CD8-positive, alpha-beta memory T cell (primary cell): ENCODE measurements at regions of chr1 and their contacts with region 1.

Region 1: GRCh38 chr1:9629445-9630201 is 21.9 kb upstream of the PIK3CD start:
- DNase-seq: peak; percentile 59 to 89 (median 75)
- H3K4me3 ChIP-seq: peak overlapping the region; percentile 94
- H3K4me3 Mint-ChIP-seq: peak overlapping the region; percentile 89 to 98 (median 97)
- H3K27ac ChIP-seq: peak overlapping the region; percentile 76
- H3K27ac Mint-ChIP-seq: peak overlapping the region; percentile 87 to 98 (median 93)
- H3K4me1 ChIP-seq: peaks cover 59% of the 10 kb centered on the region
- H3K4me1 Mint-ChIP-seq: peaks cover 46 to 81% (median 71%) of the 10 kb centered on the region in 3 donors
- H3K27me3 ChIP-seq: no peaks in the 10 kb centered on the region
- H3K27me3 Mint-ChIP-seq: no peaks in the 10 kb centered on the region

Region 2: GRCh38 chr1:9643351-9644256 is 14.0 kb after region 1 on chr1:
- CTCF ChIA-PET with region 1: interaction called, 53 read pairs
- POLR2A ChIA-PET with region 1: interaction called, 11 read pairs
- DNase-seq: peak in 1 of 5 donors; percentile 54
- H3K4me3 ChIP-seq: no peak overlapping the region
- H3K4me3 Mint-ChIP-seq: peak overlapping the region; percentile 26 to 77 (median 55)
- H3K27ac ChIP-seq: no peak overlapping the region
- H3K27ac Mint-ChIP-seq: peak overlapping the region; percentile 47 to 91 (median 77)
- H3K4me1 ChIP-seq: peaks cover 57% of the 10 kb centered on the region
- H3K4me1 Mint-ChIP-seq: peaks cover 47 to 75% (median 61%) of the 10 kb centered on the region in 3 donors
- H3K27me3 ChIP-seq: no peaks in the 10 kb centered on the region
- H3K27me3 Mint-ChIP-seq: no peaks in the 10 kb centered on the region

Region 3: DNA sequence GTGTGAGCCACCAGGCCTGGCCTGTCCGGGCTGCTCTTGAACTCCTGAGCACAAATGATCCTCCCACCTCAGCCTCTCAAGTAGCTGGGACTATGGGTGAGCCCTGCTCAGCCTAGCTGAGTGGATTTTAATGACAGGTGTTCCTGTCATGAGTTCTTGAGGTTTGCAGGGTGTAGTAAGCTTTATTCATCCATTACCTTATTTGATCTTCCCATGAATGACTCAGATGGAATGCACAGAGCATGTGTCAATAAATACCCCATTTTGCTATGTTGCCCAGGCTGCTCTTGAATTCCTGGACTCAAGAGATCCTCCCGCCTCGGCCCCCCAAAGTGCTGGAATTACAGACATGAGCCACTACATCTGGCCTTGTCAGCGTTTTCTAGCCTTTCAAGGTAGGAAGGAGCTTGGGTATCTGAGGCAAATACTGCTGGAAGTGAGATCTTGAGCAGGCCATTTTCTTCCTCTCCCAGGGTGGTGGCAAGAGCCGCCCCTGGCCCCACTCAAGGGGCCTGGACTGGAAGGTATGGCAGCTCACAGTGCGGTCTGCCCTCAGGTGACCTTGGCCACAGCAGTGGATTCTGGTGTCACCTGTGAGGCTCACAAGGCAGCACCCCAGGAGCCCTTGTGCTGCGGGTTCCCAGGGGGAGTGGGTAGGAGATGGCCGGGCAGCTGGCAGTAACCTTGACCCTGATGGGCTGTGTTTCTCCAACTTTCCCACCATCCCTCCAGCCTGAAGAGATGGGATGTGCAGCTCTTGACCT is 41.9 kb after region 1 on chr1:
- CTCF ChIA-PET with region 1: interaction called, 12 read pairs
- POLR2A ChIA-PET with region 1: no interaction called
- DNase-seq: no peak
- H3K4me3 ChIP-seq: no peak overlapping the region
- H3K4me3 Mint-ChIP-seq: peak overlapping the region in 3 of 7 donors; percentile 4 to 48 (median 28)
- H3K27ac ChIP-seq: no peak overlapping the region
- H3K27ac Mint-ChIP-seq: peak overlapping the region in 6 of 8 donors; percentile 30 to 85 (median 79)
- H3K4me1 ChIP-seq: peaks cover 55% of the 10 kb centered on the region
- H3K4me1 Mint-ChIP-seq: peaks cover 58 to 83% (median 67%) of the 10 kb centered on the region in 3 donors
- H3K27me3 ChIP-seq: no peaks in the 10 kb centered on the region
- H3K27me3 Mint-ChIP-seq: peaks cover 0 to 2% of the 10 kb centered on the region in 2 donors

Region 4: GRCh38 chr1:9701661-9702060 is 72.0 kb after region 1 on chr1:
- CTCF ChIA-PET with region 1: interaction called, 14 read pairs
- POLR2A ChIA-PET with region 1: interaction called, 3 read pairs
- DNase-seq: no peak
- H3K4me3 ChIP-seq: no peak overlapping the region
- H3K4me3 Mint-ChIP-seq: peak overlapping the region in 2 of 7 donors; percentile 15 to 44
- H3K27ac ChIP-seq: no peak overlapping the region
- H3K27ac Mint-ChIP-seq: peak overlapping the region in 4 of 8 donors; percentile 34 to 79 (median 60)
- H3K4me1 ChIP-seq: peaks cover 52% of the 10 kb centered on the region
- H3K4me1 Mint-ChIP-seq: peaks cover 62 to 85% (median 74%) of the 10 kb centered on the region in 3 donors
- H3K27me3 ChIP-seq: no peaks in the 10 kb centered on the region
- H3K27me3 Mint-ChIP-seq: peaks cover 0 to 1% of the 10 kb centered on the region in 2 donors

Region 5: DNA sequence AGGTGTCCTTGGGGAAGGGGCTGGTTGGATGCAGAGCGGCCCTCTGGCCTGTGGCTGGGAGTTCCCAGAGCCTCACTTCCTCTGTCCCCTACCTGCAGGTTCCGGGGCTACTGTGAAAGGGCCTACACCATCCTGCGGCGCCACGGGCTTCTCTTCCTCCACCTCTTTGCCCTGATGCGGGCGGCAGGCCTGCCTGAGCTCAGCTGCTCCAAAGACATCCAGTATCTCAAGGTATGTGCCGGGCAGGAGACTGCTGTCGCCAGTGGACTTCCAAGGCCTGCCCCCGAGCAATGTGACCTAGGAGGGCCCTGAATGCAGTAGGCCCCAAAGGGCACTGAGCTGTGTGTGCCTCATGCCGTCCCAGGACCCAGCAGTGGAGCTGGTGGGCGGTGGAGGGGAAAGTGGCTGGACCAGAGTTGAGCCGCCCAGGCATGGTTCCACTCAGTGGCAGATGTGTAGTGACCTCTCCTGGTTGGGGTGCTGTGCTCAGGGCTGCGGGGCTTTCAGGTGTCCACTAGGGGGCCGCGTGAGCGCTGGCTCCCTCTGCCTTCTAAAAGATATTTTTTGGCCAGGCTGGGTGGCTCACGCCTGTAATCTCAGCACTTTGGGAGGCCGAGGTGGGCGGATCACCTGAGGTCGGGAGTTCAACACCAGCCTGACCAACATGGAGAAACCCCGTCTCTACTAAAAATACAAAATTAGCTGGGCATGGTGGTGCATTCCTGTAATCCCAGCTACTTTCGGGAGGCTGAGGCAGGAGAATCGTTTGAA is 95.3 kb after region 1 on chr1:
- CTCF ChIA-PET with region 1: interaction called, 280 read pairs
- POLR2A ChIA-PET with region 1: interaction called, 36 read pairs
- DNase-seq: peak; percentile 53 to 78 (median 62)
- H3K4me3 ChIP-seq: no peak overlapping the region
- H3K4me3 Mint-ChIP-seq: peak overlapping the region in 1 of 7 donors; percentile 31
- H3K27ac ChIP-seq: no peak overlapping the region
- H3K27ac Mint-ChIP-seq: peak overlapping the region in 7 of 8 donors; percentile 21 to 90 (median 64)
- H3K4me1 ChIP-seq: peaks cover 88% of the 10 kb centered on the region
- H3K4me1 Mint-ChIP-seq: peaks cover 32 to 68% (median 38%) of the 10 kb centered on the region in 3 donors
- H3K27me3 ChIP-seq: no peaks in the 10 kb centered on the region
- H3K27me3 Mint-ChIP-seq: peaks cover 0 to 5% of the 10 kb centered on the region in 2 donors